ENCODE measurements at regions of chr3 and their contacts with region 1.

Region 1: DNA sequence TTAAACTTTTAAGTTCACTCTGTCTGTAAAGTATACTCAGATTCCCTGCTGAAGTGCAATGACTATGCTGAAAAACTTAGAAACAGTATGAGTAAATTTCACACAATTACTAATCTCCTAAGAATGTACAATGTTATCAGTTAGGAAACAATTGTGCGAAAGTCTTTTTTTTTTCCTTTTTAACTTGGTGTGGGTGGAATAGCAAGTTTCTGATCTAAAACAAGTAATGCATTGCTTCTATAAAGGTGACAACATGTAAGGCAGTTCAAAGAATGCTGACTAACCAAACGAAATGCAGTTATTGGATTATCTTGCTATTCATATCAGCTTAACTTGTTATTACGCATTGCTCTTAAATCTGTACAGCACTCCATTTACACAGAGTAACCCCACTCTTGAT is 19.3 kb upstream of the SLC12A8 start:
- DNase-seq: no peak
- ATAC-seq: no peak
- H3K4me3 ChIP-seq: no peak overlapping the region
- H3K27ac ChIP-seq: no peak overlapping the region
- H3K4me1 ChIP-seq: no peaks in the 10 kb centered on the region
- H3K27me3 ChIP-seq: no peaks in the 10 kb centered on the region
- CTCF ChIP-seq: no peak

Region 2: DNA sequence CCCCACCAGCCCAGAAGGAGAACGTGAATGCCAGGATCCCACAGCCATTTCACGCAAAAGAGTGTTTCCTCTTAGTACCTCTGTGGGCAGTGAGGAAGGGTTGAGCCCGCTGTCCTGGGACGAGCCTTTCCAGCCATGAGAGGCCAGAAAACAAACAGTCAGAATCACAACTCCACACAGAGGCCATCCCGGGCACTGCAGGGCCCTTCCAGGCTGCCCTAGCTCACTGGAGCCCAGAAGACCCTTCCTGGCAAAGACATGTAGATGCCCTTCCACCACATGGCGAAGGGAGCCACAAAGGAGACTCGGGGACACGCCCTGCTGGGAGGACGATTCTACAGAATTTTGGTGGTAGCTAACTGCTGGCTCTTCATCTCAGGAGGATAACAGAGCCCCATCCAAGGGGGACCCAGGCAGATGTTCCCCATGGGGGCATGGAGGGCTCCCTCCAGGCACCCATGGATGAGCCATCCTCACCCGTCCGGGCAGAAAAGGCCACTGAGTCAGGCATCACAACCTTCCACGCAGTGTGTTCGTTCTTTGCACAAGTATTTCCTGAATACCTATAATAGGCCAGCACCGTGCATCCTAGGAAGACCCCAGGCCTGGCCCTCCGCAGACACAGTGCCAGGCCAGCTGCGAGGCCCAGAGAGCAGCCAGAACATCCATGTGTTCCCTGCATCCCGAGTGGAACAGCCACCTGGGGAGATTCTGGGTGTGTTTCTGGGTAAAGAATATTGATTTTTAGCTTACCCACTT is 66.5 kb before region 1 on chr3:
- intact Hi-C with region 1: no loop called
- DNase-seq: peak in 1 of 2 donors; percentile 50
- ATAC-seq: peak; percentile 76 to 89 (median 85)
- H3K4me3 ChIP-seq: no peak overlapping the region
- H3K27ac ChIP-seq: no peak overlapping the region
- H3K4me1 ChIP-seq: peaks cover 0 to 44% (median 24%) of the 10 kb centered on the region in 9 donors
- H3K27me3 ChIP-seq: no peaks in the 10 kb centered on the region
- CTCF ChIP-seq: peak; percentile 69 to 85 (median 81)

Region 3: GRCh38 chr3:125192190-125193035 is 39.5 kb before region 1 on chr3:
- intact Hi-C with region 1: no loop called
- DNase-seq: no peak
- ATAC-seq: no peak
- H3K4me3 ChIP-seq: no peak overlapping the region
- H3K27ac ChIP-seq: no peak overlapping the region
- H3K4me1 ChIP-seq: no peaks in the 10 kb centered on the region
- H3K27me3 ChIP-seq: no peaks in the 10 kb centered on the region
- CTCF ChIP-seq: no peak

Region 4: GRCh38 chr3:125280668-125281361 is 48.9 kb after region 1 on chr3:
- intact Hi-C with region 1: loop called in 1 of 10 experiments (anchors 1 kb)
- DNase-seq: peak in 1 of 2 donors; percentile 43
- ATAC-seq: peak in 4 of 8 donors; percentile 28 to 64 (median 38)
- H3K4me3 ChIP-seq: no peak overlapping the region
- H3K27ac ChIP-seq: no peak overlapping the region
- H3K4me1 ChIP-seq: peaks cover 0 to 17% (median 8%) of the 10 kb centered on the region in 9 donors
- H3K27me3 ChIP-seq: no peaks in the 10 kb centered on the region
- CTCF ChIP-seq: no peak

Region 5: GRCh38 chr3:125374996-125375941 is 143.4 kb after region 1 on chr3 and contains the start of gene ZNF148:
- intact Hi-C with region 1: loop called in 1 of 10 experiments (anchors 10 kb)
- DNase-seq: peak; percentile 92 to 93
- ATAC-seq: peak; percentile 98 to 99 (median 99)
- H3K4me3 ChIP-seq: peak within 1 kb of the TSS; percentile 63 to 88 (median 72)
- H3K27ac ChIP-seq: peak within 1 kb of the TSS; percentile 59 to 98 (median 94)
- H3K4me1 ChIP-seq: peaks cover 9 to 40% (median 23%) of the 10 kb centered on the region in 9 donors
- H3K27me3 ChIP-seq: no peaks in the 10 kb centered on the region
- CTCF ChIP-seq: peak in 4 of 9 donors; percentile 9 to 31 (median 14)
- total RNA-seq, gene ZNF148: 33.5 to 59.6 (median 46.1) TPM